ENCODE measurements at regions of chr12 and their contacts with region 1.

Region 1: GRCh38 chr12:12611512-12612306 is at the start of gene CREBL2:
- DNase-seq: peak; percentile 72 to 95 (median 85)
- ATAC-seq: peak; percentile 90
- H3K4me3 ChIP-seq: peak within 1 kb of the TSS; percentile 72 to 90
- H3K4me3 Mint-ChIP-seq: peak within 1 kb of the TSS; percentile 88
- H3K27ac ChIP-seq: peak within 1 kb of the TSS; percentile 82 to 89
- H3K27ac Mint-ChIP-seq: peak within 1 kb of the TSS; percentile 95
- H3K4me1 ChIP-seq: peaks cover 52% of the 10 kb centered on the region
- H3K4me1 Mint-ChIP-seq: peaks cover 53% of the 10 kb centered on the region
- H3K27me3 ChIP-seq: no peaks in the 10 kb centered on the region
- H3K27me3 Mint-ChIP-seq: no peaks in the 10 kb centered on the region
- CTCF ChIP-seq: no peak
- total RNA-seq, gene CREBL2: 10.2 to 11.8 TPM

Region 2: GRCh38 chr12:12562585-12563261 is 49.0 kb before region 1 on chr12 and contains the start of gene DUSP16:
- CTCF ChIA-PET with region 1: no interaction called
- POLR2A ChIA-PET with region 1: interaction called, 5 read pairs
- intact Hi-C with region 1: loop called (anchors 1 kb)
- DNase-seq: peak; percentile 50 to 95 (median 75)
- ATAC-seq: peak; percentile 65
- H3K4me3 ChIP-seq: peak within 1 kb of the TSS; percentile 77 to 80
- H3K4me3 Mint-ChIP-seq: peak within 1 kb of the TSS; percentile 95
- H3K27ac ChIP-seq: peak within 1 kb of the TSS; percentile 92 to 96
- H3K27ac Mint-ChIP-seq: peak within 1 kb of the TSS; percentile 99
- H3K4me1 ChIP-seq: peaks cover 16% of the 10 kb centered on the region
- H3K4me1 Mint-ChIP-seq: peaks cover 43% of the 10 kb centered on the region
- H3K27me3 ChIP-seq: no peaks in the 10 kb centered on the region
- H3K27me3 Mint-ChIP-seq: no peaks in the 10 kb centered on the region
- CTCF ChIP-seq: no peak
- total RNA-seq, gene DUSP16: 27.9 to 34.1 TPM

Region 3: DNA sequence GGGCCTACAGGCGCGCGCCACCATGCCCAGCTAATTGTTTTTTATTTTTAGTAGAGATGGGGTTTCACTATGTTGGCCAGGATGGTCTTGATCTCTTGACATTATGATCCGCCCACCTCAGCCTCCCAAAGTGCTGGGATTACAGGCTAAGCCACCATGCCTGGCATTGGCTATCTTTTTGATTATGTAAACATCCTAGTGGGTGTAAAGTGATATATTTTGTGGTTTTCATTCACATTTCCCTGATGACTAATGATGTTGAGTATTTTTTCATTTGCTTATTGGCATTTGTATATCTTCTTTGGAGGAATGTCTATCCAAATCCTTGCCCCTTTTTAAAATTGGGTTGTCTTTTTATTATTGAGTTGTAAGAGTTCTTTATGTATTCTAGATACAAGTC is 16.3 kb after region 1 on chr12:
- CTCF ChIA-PET with region 1: interaction called, 11 read pairs
- POLR2A ChIA-PET with region 1: interaction called, 4 read pairs
- intact Hi-C with region 1: loop called in 1 of 2 experiments (anchors 2 kb)
- DNase-seq: no peak
- ATAC-seq: no peak
- H3K4me3 ChIP-seq: no peak overlapping the region
- H3K4me3 Mint-ChIP-seq: no peak overlapping the region
- H3K27ac ChIP-seq: no peak overlapping the region
- H3K27ac Mint-ChIP-seq: no peak overlapping the region
- H3K4me1 ChIP-seq: peaks cover 44% of the 10 kb centered on the region
- H3K4me1 Mint-ChIP-seq: peaks cover 79% of the 10 kb centered on the region
- H3K27me3 ChIP-seq: no peaks in the 10 kb centered on the region
- H3K27me3 Mint-ChIP-seq: no peaks in the 10 kb centered on the region
- CTCF ChIP-seq: no peak

Region 4: DNA sequence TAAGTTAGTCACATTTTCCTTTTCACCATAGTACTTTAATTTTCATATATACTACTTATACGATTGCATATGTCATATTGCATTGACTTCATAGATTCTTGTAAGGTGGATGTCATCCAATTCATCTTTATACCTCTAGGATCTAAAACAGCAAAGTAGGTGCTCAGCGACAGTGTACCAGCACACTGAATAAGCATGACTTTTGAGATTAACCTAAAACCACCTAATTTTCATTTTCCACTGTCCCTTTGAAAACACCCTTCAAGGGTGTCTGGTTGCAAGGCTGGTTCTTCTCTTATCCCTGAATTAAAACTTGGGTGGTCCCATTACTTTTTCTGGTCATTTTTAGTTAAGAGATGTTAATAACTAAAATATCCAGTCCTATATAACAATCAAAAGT is 79.8 kb after region 1 on chr12:
- CTCF ChIA-PET with region 1: no interaction called
- POLR2A ChIA-PET with region 1: no interaction called
- intact Hi-C with region 1: loop called (anchors 1 to 5 kb)
- DNase-seq: no peak
- ATAC-seq: no peak
- H3K4me3 ChIP-seq: no peak overlapping the region
- H3K4me3 Mint-ChIP-seq: no peak overlapping the region
- H3K27ac ChIP-seq: no peak overlapping the region
- H3K27ac Mint-ChIP-seq: no peak overlapping the region
- H3K4me1 ChIP-seq: peaks cover 13% of the 10 kb centered on the region
- H3K4me1 Mint-ChIP-seq: peaks cover 19% of the 10 kb centered on the region
- H3K27me3 ChIP-seq: no peaks in the 10 kb centered on the region
- H3K27me3 Mint-ChIP-seq: no peaks in the 10 kb centered on the region
- CTCF ChIP-seq: no peak

Region 5: GRCh38 chr12:12716793-12717585 is 105.3 kb after region 1 on chr12 and contains the start of gene CDKN1B:
- CTCF ChIA-PET with region 1: no interaction called
- POLR2A ChIA-PET with region 1: interaction called, 4 read pairs
- intact Hi-C with region 1: loop called in 1 of 2 experiments (anchors 5 kb)
- DNase-seq: peak; percentile 76 to 93 (median 86)
- ATAC-seq: peak; percentile 62
- H3K4me3 ChIP-seq: peak within 1 kb of the TSS; percentile 95 to 96
- H3K4me3 Mint-ChIP-seq: peak within 1 kb of the TSS; percentile 98
- H3K27ac ChIP-seq: peak within 1 kb of the TSS; percentile 93 to 97
- H3K27ac Mint-ChIP-seq: peak within 1 kb of the TSS; percentile 98
- H3K4me1 ChIP-seq: peaks cover 47% of the 10 kb centered on the region
- H3K4me1 Mint-ChIP-seq: peaks cover 66% of the 10 kb centered on the region
- H3K27me3 ChIP-seq: no peaks in the 10 kb centered on the region
- H3K27me3 Mint-ChIP-seq: no peaks in the 10 kb centered on the region
- CTCF ChIP-seq: no peak
- total RNA-seq, gene CDKN1B: 240 to 245 TPM

Region 6: GRCh38 chr12:12813120-12814101 is 201.7 kb after region 1 on chr12 and contains the start of gene DDX47:
- CTCF ChIA-PET with region 1: no interaction called
- POLR2A ChIA-PET with region 1: no interaction called
- intact Hi-C with region 1: loop called (anchors 5 kb)
- DNase-seq: peak; percentile 94 to 99 (median 96)
- ATAC-seq: peak; percentile 88
- H3K4me3 ChIP-seq: peak within 1 kb of the TSS; percentile 88 to 98
- H3K4me3 Mint-ChIP-seq: peak within 1 kb of the TSS; percentile 95
- H3K27ac ChIP-seq: peak within 1 kb of the TSS; percentile 78 to 91
- H3K27ac Mint-ChIP-seq: peak within 1 kb of the TSS; percentile 96
- H3K4me1 ChIP-seq: peaks cover 34% of the 10 kb centered on the region
- H3K4me1 Mint-ChIP-seq: peaks cover 65% of the 10 kb centered on the region
- H3K27me3 ChIP-seq: no peaks in the 10 kb centered on the region
- H3K27me3 Mint-ChIP-seq: no peaks in the 10 kb centered on the region
- CTCF ChIP-seq: peak; percentile 93
- total RNA-seq, gene DDX47: 173 to 174 TPM